PC-3 (cell line): ENCODE measurements at regions of chr5 and their contacts with region 1.

Region 1: GRCh38 chr5:71830681-71831539 is 111.8 kb downstream of the CARTPT start:
- DNase-seq: peak; percentile 72
- ATAC-seq: peak; percentile 63
- H3K4me3 ChIP-seq: no peak overlapping the region
- H3K27ac ChIP-seq: peak overlapping the region; percentile 33
- H3K4me1 ChIP-seq: peaks cover 28% of the 10 kb centered on the region
- H3K27me3 ChIP-seq: no peaks in the 10 kb centered on the region
- CTCF ChIP-seq: no peak

Region 2: GRCh38 chr5:71905834-71906711 is 75.2 kb after region 1 on chr5:
- CTCF ChIA-PET with region 1: no interaction called
- POLR2A ChIA-PET with region 1: no interaction called
- intact Hi-C with region 1: no loop called
- DNase-seq: no peak
- ATAC-seq: no peak
- H3K4me3 ChIP-seq: no peak overlapping the region
- H3K27ac ChIP-seq: no peak overlapping the region
- H3K4me1 ChIP-seq: no peaks in the 10 kb centered on the region
- H3K27me3 ChIP-seq: no peaks in the 10 kb centered on the region
- CTCF ChIP-seq: no peak

Region 3: GRCh38 chr5:71922584-71923106 is 91.7 kb after region 1 on chr5:
- CTCF ChIA-PET with region 1: no interaction called
- POLR2A ChIA-PET with region 1: no interaction called
- intact Hi-C with region 1: loop called (anchors 10 kb)
- DNase-seq: peak; percentile 79
- ATAC-seq: peak; percentile 88
- H3K4me3 ChIP-seq: no peak overlapping the region
- H3K27ac ChIP-seq: peak overlapping the region; percentile 67
- H3K4me1 ChIP-seq: peaks cover 22% of the 10 kb centered on the region
- H3K27me3 ChIP-seq: no peaks in the 10 kb centered on the region
- CTCF ChIP-seq: peak; percentile 31; the same call in 1 of the 2 replicates